ENCODE measurements at regions of chr3 and their contacts with region 1.

Region 1: GRCh38 chr3:141644931-141645330 is 93.2 kb upstream of the RNF7 start:
- DNase-seq: peak; percentile 59
- H3K4me3 Mint-ChIP-seq: no peak overlapping the region
- H3K27ac Mint-ChIP-seq: no peak overlapping the region
- H3K4me1 Mint-ChIP-seq: no peaks in the 10 kb centered on the region
- H3K27me3 Mint-ChIP-seq: no peaks in the 10 kb centered on the region

Region 2: GRCh38 chr3:141441381-141442364 is 203.3 kb before region 1 on chr3:
- intact Hi-C with region 1: no loop called
- DNase-seq: peak; percentile 50
- H3K4me3 Mint-ChIP-seq: no peak overlapping the region
- H3K27ac Mint-ChIP-seq: no peak overlapping the region
- H3K4me1 Mint-ChIP-seq: peaks cover 16% of the 10 kb centered on the region
- H3K27me3 Mint-ChIP-seq: no peaks in the 10 kb centered on the region

Region 3: GRCh38 chr3:141460097-141460704 is 184.7 kb before region 1 on chr3:
- intact Hi-C with region 1: loop called (anchors 1 kb)
- DNase-seq: peak; percentile 77
- H3K4me3 Mint-ChIP-seq: no peak overlapping the region
- H3K27ac Mint-ChIP-seq: no peak overlapping the region
- H3K4me1 Mint-ChIP-seq: peaks cover 15% of the 10 kb centered on the region
- H3K27me3 Mint-ChIP-seq: peaks cover 1% of the 10 kb centered on the region

Region 4: GRCh38 chr3:141659821-141660613 is 15.1 kb after region 1 on chr3:
- intact Hi-C with region 1: no loop called
- DNase-seq: no peak
- H3K4me3 Mint-ChIP-seq: peak overlapping the region; percentile 49
- H3K27ac Mint-ChIP-seq: no peak overlapping the region
- H3K4me1 Mint-ChIP-seq: peaks cover 1% of the 10 kb centered on the region
- H3K27me3 Mint-ChIP-seq: peaks cover 85% of the 10 kb centered on the region

Region 5: DNA sequence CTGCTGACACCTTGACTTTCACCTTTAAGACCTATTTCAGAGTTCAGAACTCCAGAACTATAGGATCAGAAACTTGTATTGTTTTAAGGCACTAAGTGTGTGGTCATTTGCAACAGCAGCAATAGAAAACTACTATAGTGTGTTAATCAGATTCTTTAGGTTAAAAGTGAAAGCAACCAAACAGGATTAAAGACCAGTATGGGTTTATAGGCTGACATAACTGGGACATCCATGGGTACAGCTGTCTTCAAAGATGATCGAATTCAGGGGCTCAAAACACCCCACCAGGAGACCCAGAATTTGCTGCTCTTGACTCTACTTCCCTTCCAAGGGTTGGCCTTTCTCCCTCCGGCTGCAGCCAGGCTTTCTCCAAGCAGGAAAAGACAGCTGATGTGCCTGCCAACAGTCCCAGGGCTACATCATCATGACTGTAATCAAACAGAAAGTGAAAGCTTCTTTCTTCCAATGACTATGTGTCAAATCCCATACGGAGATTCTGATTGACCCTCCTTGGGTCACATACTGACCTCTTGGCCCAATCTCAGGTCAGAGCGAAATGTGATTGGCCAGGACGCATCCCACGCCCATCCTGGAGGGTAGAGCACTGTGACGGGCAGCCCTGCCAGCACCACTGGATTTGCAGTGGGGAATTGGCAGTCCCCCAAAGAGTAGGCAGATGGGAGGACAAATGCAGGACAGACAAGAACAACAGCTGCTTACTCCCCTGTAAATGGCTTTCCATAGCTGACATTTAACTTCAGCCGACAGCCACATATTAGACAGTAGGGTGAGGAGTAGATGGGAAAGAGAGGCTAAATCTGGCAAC is 41.7 kb after region 1 on chr3:
- intact Hi-C with region 1: no loop called
- DNase-seq: no peak
- H3K4me3 Mint-ChIP-seq: peak overlapping the region; percentile 66
- H3K27ac Mint-ChIP-seq: peak overlapping the region; percentile 71
- H3K4me1 Mint-ChIP-seq: peaks cover 10% of the 10 kb centered on the region
- H3K27me3 Mint-ChIP-seq: peaks cover 4% of the 10 kb centered on the region

Measured in activated T-helper 2 cell treated with anti-CD3 and anti-CD28 coated beads, Interferon-gamma antibody, Interleukin-2, Interleukin-4, amounts not matched to agents 10 μg/mL and 5 μg/mL and 100 μg/mL, durations not matched to agents 14 hours and 24 hours and 36 hours (primary cell).